CD4-positive, alpha-beta T cell (primary cell): ENCODE measurements at regions of chr2 and their contacts with region 1.

Region 1: DNA sequence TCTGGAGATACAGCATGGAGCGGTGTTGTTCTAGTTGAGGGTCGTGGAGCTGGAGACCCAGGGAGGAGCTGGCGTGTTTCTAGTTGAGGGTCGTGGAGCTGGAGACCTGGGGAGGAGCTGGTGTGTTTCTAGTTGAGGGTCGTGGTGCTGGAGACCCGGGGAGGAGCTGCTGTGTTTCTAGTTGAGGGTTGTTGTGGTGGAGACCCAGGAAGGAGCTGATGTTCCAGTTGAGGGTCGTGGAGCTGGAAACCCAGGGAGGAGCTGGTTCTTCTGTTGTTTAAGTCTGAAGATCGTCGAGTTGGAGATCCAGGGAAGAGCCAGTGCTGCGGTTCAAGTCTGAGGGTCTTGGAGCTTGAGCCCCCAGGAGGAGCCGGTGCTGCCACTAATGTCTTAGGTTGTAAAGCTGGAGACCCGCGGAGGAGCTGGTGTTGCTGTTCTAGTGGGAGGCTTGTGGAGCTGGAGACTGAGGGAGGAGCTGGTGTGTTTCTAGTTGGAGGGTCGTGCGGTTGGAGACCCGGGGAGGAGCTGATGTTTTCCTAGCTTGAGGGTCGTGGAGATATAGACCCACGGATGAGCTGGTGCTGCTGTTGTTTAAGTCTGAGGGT is 155.3 kb downstream of the RTP5 start:
- DNase-seq: peak in 1 of 14 experiments; percentile 15
- ATAC-seq: no peak
- H3K4me3 ChIP-seq: no peak overlapping the region
- H3K4me3 Mint-ChIP-seq: no peak overlapping the region
- H3K27ac ChIP-seq: no peak overlapping the region
- H3K27ac Mint-ChIP-seq: no peak overlapping the region
- H3K4me1 ChIP-seq: peaks cover 10% of the 10 kb centered on the region
- H3K4me1 Mint-ChIP-seq: peaks cover 21% of the 10 kb centered on the region
- H3K27me3 ChIP-seq: no peaks in the 10 kb centered on the region
- H3K27me3 Mint-ChIP-seq: no peaks in the 10 kb centered on the region
- CTCF ChIP-seq: no peak

Region 2: GRCh38 chr2:242043538-242044312 is 18.9 kb after region 1 on chr2:
- CTCF ChIA-PET with region 1: no interaction called
- POLR2A ChIA-PET with region 1: no interaction called
- intact Hi-C with region 1: loop called in 1 of 2 experiments (anchors 2 kb)
- DNase-seq: no peak
- ATAC-seq: no peak
- H3K4me3 ChIP-seq: no peak overlapping the region
- H3K4me3 Mint-ChIP-seq: no peak overlapping the region
- H3K27ac ChIP-seq: no peak overlapping the region
- H3K27ac Mint-ChIP-seq: no peak overlapping the region
- H3K4me1 ChIP-seq: no peaks in the 10 kb centered on the region
- H3K4me1 Mint-ChIP-seq: no peaks in the 10 kb centered on the region
- H3K27me3 ChIP-seq: peaks cover 0 to 3% of the 10 kb centered on the region in 2 experiments
- H3K27me3 Mint-ChIP-seq: peaks cover 43% of the 10 kb centered on the region
- CTCF ChIP-seq: no peak